PC-9 (cell line): ENCODE measurements at regions of chr6 and their contacts with region 1.

Region 1: GRCh38 chr6:148448369-148449012 is 105.9 kb downstream of the SASH1 start:
- DNase-seq: no peak
- H3K4me3 ChIP-seq: no peak overlapping the region
- H3K27ac ChIP-seq: no peak overlapping the region
- H3K4me1 ChIP-seq: peaks cover 44% of the 10 kb centered on the region
- H3K27me3 ChIP-seq: no peaks in the 10 kb centered on the region
- CTCF ChIP-seq: no peak

Region 2: DNA sequence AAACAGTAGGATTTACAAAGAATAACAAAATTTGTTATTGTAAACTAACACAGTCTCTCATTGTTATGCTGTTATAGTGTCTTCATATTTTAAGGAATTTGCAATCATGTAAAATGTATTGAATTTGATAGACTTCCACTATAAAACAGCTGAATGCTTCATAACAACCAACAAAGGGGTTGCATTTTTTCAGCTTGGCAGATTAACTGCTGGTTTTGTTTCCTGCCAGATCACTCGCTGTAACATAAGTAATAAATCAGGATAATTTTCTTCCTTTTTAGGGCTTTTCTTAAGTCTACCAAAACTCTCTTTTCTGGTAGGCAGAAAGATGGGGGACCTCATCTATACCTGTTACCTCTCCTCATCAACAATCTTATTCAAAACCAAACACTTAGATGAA is 770.2 kb before region 1 on chr6:
- CTCF ChIA-PET with region 1: no interaction called
- POLR2A ChIA-PET with region 1: no interaction called
- intact Hi-C with region 1: no loop called
- DNase-seq: no peak
- H3K4me3 ChIP-seq: no peak overlapping the region
- H3K27ac ChIP-seq: no peak overlapping the region
- H3K4me1 ChIP-seq: no peaks in the 10 kb centered on the region
- H3K27me3 ChIP-seq: no peaks in the 10 kb centered on the region
- CTCF ChIP-seq: no peak

Region 3: DNA sequence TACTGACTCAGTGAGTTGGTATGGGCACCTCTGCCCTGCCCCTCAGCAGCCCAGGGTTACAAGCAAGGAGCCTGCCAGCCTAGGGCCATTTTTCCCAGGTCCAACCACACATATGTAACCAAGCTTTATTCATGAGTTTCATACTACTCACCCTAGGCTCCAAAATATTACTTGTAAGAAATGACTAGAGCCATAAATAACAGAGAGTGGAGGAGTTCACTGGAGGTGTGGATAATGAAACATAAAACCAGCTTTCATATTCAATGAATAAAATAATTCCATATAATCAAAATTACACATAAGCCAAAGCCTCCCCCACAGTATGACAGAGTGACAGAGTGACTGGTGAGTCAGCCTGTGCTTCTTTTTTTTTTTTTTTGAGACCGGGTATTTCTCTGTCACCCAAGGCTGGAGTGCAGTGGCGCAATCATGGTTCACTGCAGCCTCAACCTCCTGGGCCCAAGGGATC is 335.6 kb before region 1 on chr6:
- CTCF ChIA-PET with region 1: no interaction called
- POLR2A ChIA-PET with region 1: interaction called, 15 read pairs
- intact Hi-C with region 1: no loop called
- DNase-seq: peak; percentile 37 to 39
- H3K4me3 ChIP-seq: no peak overlapping the region
- H3K27ac ChIP-seq: peak overlapping the region; percentile 43; the same call in 1 of the 2 replicates
- H3K4me1 ChIP-seq: peaks cover 21% of the 10 kb centered on the region
- H3K27me3 ChIP-seq: no peaks in the 10 kb centered on the region
- CTCF ChIP-seq: no peak

Region 4: DNA sequence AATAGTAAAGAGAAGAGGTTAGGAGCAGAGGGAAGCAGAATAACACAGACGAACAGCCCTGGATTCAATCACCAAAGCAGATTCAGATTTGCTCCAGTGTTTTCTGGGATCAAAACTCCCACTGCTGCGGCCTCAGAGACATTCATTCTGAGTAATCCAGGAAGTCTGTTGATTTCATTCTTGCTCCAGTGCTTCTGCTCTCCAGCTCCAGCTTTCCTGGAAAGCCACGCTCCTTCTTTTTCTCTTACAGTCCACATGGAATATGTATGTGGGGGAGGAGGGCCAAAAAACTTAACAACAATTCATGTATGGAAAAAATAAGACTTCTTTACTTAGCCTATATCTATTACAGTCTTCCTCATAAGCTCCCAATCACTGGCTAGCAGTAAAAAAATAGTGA is 271.9 kb after region 1 on chr6:
- CTCF ChIA-PET with region 1: no interaction called
- POLR2A ChIA-PET with region 1: no interaction called
- intact Hi-C with region 1: no loop called
- DNase-seq: no peak
- H3K4me3 ChIP-seq: no peak overlapping the region
- H3K27ac ChIP-seq: no peak overlapping the region
- H3K4me1 ChIP-seq: no peaks in the 10 kb centered on the region
- H3K27me3 ChIP-seq: no peaks in the 10 kb centered on the region
- CTCF ChIP-seq: no peak